Breast epithelium (tissue), 4 donors: ENCODE measurements at regions of chr5 and their contacts with region 1.

Region 1: DNA sequence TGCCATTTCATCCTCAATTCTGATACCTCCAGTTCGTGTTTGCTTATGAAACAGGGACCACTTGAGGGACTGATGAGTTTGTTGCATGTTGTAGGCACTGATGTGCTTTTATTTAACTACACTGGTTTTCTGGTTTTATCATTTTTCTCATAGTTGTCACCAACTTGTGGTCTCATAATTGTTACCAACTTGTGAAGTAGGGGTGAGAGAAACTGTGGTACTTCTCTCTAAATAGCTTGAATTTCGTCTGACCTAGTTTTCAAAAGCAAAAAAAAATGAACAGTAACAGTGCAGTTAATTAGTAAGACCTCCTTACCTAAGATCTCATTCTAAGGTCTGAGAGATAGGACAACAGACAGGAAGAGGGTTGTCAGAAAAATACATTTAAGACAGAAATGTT is 78.0 kb downstream of the ANXA2R start:
- DNase-seq: no peak
- H3K4me3 ChIP-seq: no peak overlapping the region
- H3K27ac ChIP-seq: no peak overlapping the region
- H3K4me1 ChIP-seq: no peaks in the 10 kb centered on the region
- H3K27me3 ChIP-seq: no peaks in the 10 kb centered on the region
- CTCF ChIP-seq: no peak
- POLR2A ChIP-seq: no peak

Region 2: DNA sequence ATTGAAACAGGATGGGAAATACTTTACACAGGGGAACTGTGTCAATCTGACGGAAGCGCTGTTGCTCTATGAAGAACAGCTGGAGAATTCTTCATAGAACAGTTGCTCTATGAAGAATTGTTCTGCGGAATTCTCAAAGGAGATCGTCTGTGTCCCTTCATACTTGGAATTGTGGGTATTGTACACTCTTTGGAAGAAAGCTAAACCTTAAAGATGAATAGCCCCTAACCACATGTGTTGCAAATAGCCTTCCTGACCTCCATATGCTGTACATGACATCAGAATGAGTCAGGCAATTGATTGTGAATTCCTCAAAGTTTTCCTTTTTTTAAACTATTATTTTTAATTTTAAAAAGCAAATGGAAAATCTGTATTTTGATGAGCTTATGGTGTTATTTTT is 245.5 kb after region 1 on chr5:
- intact Hi-C with region 1: loop called (anchors 5 kb)
- DNase-seq: no peak
- H3K4me3 ChIP-seq: no peak overlapping the region
- H3K27ac ChIP-seq: no peak overlapping the region
- H3K4me1 ChIP-seq: no peaks in the 10 kb centered on the region
- H3K27me3 ChIP-seq: no peaks in the 10 kb centered on the region
- CTCF ChIP-seq: no peak
- POLR2A ChIP-seq: no peak